ENCODE measurements at regions of chrX and their contacts with region 1.

Region 1: GRCh38 chrX:13119386-13119785 is 75.0 kb upstream of the FAM9C start:
- DNase-seq: no peak
- H3K4me3 ChIP-seq: no peak overlapping the region
- H3K27ac ChIP-seq: peak overlapping the region; percentile 38
- H3K4me1 ChIP-seq: peaks cover 13% of the 10 kb centered on the region
- H3K27me3 ChIP-seq: no peaks in the 10 kb centered on the region
- CTCF ChIP-seq: no peak
- POLR2A ChIP-seq: no peak

Region 2: DNA sequence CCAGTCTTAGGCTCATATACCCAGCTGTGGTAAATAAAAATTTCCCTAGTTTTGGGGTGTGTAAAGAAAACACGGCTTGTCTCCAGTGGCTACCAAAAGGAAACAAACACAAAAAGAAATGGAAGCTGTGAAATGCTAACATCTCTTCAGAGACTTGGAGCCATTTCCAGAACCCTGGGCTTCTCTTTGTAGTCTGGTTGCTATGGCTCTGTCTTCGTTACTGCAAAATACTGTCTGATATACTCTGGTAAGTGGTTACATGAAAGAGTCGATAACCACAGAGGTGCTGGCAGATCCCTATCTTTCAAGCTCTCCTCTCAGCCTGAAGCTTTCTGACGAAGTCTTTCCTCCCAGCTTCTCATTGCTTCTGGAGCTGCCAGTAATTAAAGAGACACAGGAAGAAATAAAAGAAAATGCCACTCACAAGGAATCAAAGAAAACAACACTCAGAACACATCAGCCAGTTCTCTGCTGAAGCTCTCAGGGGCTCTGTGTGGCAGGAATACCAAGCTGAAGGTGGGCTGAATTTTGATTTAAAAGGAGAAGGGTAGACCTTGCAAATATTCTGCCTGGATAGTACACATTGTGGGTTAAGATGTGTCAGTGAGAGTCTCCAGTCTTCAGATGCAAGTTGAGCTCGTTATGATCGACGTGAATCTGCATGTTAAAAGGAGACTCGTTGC is 32.6 kb after region 1 on chrX:
- intact Hi-C with region 1: loop called (anchors 5 kb)
- DNase-seq: no peak
- H3K4me3 ChIP-seq: no peak overlapping the region
- H3K27ac ChIP-seq: peak overlapping the region; percentile 43
- H3K4me1 ChIP-seq: no peaks in the 10 kb centered on the region
- H3K27me3 ChIP-seq: no peaks in the 10 kb centered on the region
- CTCF ChIP-seq: no peak
- POLR2A ChIP-seq: no peak

Measured in vagina (tissue), 2 donors.